ENCODE measurements at regions of chr3 and their contacts with region 1.

Region 1: GRCh38 chr3:168047190-168047795 is 48.4 kb downstream of the GOLIM4 start:
- DNase-seq: peak; percentile 83
- H3K4me3 ChIP-seq: no peak overlapping the region
- H3K27ac ChIP-seq: no peak overlapping the region
- H3K4me1 ChIP-seq: peaks cover 6% of the 10 kb centered on the region
- H3K27me3 ChIP-seq: no peaks in the 10 kb centered on the region
- CTCF ChIP-seq: peak; percentile 59
- POLR2A ChIP-seq: no peak

Region 2: DNA sequence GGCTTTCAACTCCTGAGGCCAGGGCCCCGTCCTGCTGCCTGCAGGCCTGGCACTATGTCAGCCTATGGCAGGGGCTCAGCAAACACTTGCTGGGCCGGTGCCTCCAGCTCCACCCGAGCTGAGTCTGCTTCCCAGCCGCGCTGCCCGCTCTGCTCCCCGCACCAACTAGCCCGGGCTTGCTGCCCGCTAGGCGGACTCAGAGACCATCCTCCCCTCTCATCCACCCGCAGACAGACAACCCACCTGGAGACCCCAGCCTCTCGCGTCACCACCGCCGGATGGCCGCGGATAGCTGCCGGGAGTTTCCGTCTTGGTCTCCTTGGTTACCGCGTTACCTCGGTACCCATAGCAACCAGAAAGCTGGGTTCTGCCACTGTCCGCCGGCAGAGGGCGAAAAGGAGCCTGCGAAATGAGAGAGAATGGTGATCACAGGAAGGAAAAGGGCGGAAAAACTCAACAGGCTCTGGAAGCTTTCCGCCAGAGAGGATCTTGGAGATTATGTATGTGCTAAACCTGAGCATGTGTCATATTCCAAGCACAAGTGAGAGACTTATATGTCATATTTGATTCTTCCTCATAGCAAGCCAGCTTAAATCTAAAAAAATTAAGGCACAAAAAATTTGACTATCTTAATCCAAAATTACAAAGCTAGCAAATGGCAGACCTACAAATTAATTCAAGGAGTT is 667.1 kb before region 1 on chr3 and contains the start of gene ZBBX:
- CTCF ChIA-PET with region 1: no interaction called
- POLR2A ChIA-PET with region 1: no interaction called
- dilution Hi-C with region 1: no loop called
- intact Hi-C with region 1: loop called (anchors 10 kb)
- DNase-seq: peak; percentile 89
- H3K4me3 ChIP-seq: peak within 1 kb of the TSS in 2 of 3 experiments; percentile 55 to 57
- H3K27ac ChIP-seq: no peak within 1 kb of the TSS
- H3K4me1 ChIP-seq: no peaks in the 10 kb centered on the region
- H3K27me3 ChIP-seq: no peaks in the 10 kb centered on the region
- CTCF ChIP-seq: peak; percentile 87 to 95
- POLR2A ChIP-seq: no peak
- total RNA-seq, gene ZBBX: not detected in 2 replicates

Region 3: DNA sequence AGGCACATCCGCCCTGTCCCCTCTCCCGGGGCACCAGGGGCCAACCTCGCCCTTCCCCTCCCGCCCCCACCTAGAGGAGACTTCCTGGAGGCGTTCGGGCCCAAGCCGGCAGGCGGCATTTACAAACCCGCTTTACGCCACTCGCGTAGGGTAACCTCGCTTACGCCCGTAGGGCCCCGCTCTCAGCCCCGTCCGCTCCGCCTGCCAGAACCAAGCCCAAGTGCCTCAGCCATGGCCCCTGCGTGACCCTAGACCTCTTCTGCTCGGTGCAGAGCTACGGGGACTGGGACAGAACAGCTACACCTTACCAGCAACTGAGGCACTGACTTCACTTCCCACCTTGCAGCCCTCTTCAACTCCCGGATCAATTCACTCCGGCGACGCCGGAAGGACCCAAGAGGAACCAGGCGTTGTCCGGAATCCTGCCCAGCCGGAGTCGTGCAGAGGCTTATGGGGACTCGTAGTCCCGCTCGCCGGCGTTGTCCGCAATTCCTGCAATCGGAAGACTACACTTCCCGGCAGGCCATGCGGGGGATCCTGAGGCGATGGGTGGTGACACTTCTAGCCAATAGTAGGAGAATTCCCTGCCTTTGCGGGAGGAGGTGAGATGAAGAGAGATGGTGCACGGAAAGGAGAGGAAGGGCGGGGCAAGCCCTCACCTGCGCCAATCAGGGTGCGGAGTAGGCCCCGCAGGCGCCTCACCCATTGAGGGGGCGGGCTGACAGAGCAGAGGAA is 312.6 kb before region 1 on chr3 and contains the start of gene PDCD10:
- CTCF ChIA-PET with region 1: no interaction called
- POLR2A ChIA-PET with region 1: no interaction called
- dilution Hi-C with region 1: no loop called
- intact Hi-C with region 1: loop called (anchors 5 kb)
- DNase-seq: peak; percentile 97
- H3K4me3 ChIP-seq: peak within 1 kb of the TSS; percentile 48 to 66 (median 61)
- H3K27ac ChIP-seq: peak within 1 kb of the TSS; percentile 21
- H3K4me1 ChIP-seq: peaks cover 10% of the 10 kb centered on the region
- H3K27me3 ChIP-seq: peaks cover 0 to 9% of the 10 kb centered on the region in 2 experiments
- CTCF ChIP-seq: peak in 1 of 2 donors; percentile 8
- POLR2A ChIP-seq: peak; percentile 65
- total RNA-seq, gene PDCD10: 47.8 and 50.1 TPM in 2 replicates

Region 4: GRCh38 chr3:168066882-168067281 is 19.6 kb after region 1 on chr3:
- CTCF ChIA-PET with region 1: interaction called, 5 read pairs
- POLR2A ChIA-PET with region 1: no interaction called
- dilution Hi-C with region 1: no loop called
- intact Hi-C with region 1: loop called (anchors 2 kb)
- DNase-seq: no peak
- H3K4me3 ChIP-seq: no peak overlapping the region
- H3K27ac ChIP-seq: no peak overlapping the region
- H3K4me1 ChIP-seq: no peaks in the 10 kb centered on the region
- H3K27me3 ChIP-seq: no peaks in the 10 kb centered on the region
- CTCF ChIP-seq: no peak
- POLR2A ChIP-seq: no peak

Region 5: GRCh38 chr3:168095611-168096209 is 48.4 kb after region 1 on chr3 and contains the start of gene GOLIM4:
- CTCF ChIA-PET with region 1: interaction called, 18 read pairs
- POLR2A ChIA-PET with region 1: no interaction called
- dilution Hi-C with region 1: no loop called
- intact Hi-C with region 1: loop called (anchors 1 kb)
- DNase-seq: peak; percentile 97
- H3K4me3 ChIP-seq: peak within 1 kb of the TSS; percentile 49 to 82 (median 78)
- H3K27ac ChIP-seq: peak within 1 kb of the TSS; percentile 73
- H3K4me1 ChIP-seq: peaks cover 21% of the 10 kb centered on the region
- H3K27me3 ChIP-seq: no peaks in the 10 kb centered on the region
- CTCF ChIP-seq: no peak
- POLR2A ChIP-seq: peak; percentile 72
- total RNA-seq, gene GOLIM4: 39.7 and 40.8 TPM in 2 replicates

Region 6: DNA sequence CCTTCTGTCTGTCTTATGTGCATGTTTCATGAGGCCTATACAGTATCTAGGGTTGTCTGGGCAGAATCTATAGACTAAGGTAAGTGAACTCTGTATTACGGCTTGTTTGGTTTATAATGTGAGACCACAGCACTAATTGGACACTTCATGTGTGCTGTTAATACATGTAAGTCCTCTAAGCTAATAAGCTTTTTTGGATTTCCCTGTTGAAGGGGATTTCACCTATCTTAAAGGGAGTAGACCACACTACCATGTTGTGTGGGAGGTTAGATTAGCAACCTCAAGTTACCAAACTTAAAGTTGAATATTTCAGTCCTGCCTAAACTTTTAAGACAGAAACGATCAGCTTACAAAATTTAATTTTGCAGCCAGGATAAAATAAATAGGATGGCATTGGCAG is 238.2 kb after region 1 on chr3:
- CTCF ChIA-PET with region 1: no interaction called
- POLR2A ChIA-PET with region 1: no interaction called
- dilution Hi-C with region 1: no loop called
- intact Hi-C with region 1: no loop called
- DNase-seq: no peak
- H3K4me3 ChIP-seq: no peak overlapping the region
- H3K27ac ChIP-seq: no peak overlapping the region
- H3K4me1 ChIP-seq: no peaks in the 10 kb centered on the region
- H3K27me3 ChIP-seq: no peaks in the 10 kb centered on the region
- CTCF ChIP-seq: no peak
- POLR2A ChIP-seq: no peak